ENCODE measurements at regions of chr3 and their contacts with region 1.

Region 1: DNA sequence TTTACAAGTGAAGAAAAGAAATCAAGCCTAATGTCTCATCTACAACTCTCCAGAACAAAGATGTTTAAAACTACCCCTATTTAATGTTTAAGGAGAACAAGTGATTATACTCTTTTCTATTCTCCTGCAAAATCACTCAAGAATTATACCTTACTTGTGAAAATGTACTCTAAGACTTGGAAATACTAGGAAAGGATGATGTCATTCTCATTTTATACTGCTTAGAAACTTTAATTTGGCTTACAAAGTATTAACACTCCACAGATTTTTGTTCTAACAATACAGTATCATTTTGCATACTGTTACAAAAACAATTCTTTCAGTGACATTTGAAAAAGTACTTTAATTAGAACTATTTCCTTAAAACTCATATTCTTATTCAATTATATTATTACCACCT is 89.5 kb downstream of the SMARCC1 start:
- DNase-seq: no peak
- H3K4me3 ChIP-seq: no peak overlapping the region
- H3K27ac ChIP-seq: no peak overlapping the region
- H3K4me1 ChIP-seq: no peaks in the 10 kb centered on the region
- H3K27me3 ChIP-seq: no peaks in the 10 kb centered on the region
- CTCF ChIP-seq: no peak

Region 2: GRCh38 chr3:47663630-47664240 is 28.4 kb before region 1 on chr3:
- CTCF ChIA-PET with region 1: no interaction called
- POLR2A ChIA-PET with region 1: interaction called, 16 read pairs
- intact Hi-C with region 1: no loop called
- DNase-seq: no peak
- H3K4me3 ChIP-seq: no peak overlapping the region
- H3K27ac ChIP-seq: no peak overlapping the region
- H3K4me1 ChIP-seq: peaks cover 1% of the 10 kb centered on the region; the same call in 1 of the 2 replicates
- H3K27me3 ChIP-seq: no peaks in the 10 kb centered on the region
- CTCF ChIP-seq: no peak

Region 3: GRCh38 chr3:47976135-47976732 is 284.1 kb after region 1 on chr3:
- CTCF ChIA-PET with region 1: no interaction called
- POLR2A ChIA-PET with region 1: no interaction called
- intact Hi-C with region 1: no loop called
- DNase-seq: no peak
- H3K4me3 ChIP-seq: no peak overlapping the region
- H3K27ac ChIP-seq: no peak overlapping the region
- H3K4me1 ChIP-seq: no peaks in the 10 kb centered on the region
- H3K27me3 ChIP-seq: no peaks in the 10 kb centered on the region
- CTCF ChIP-seq: no peak

Measured in PC-9 (cell line).